PC-3 (cell line): ENCODE measurements at regions of chr7 and their contacts with region 1.

Region 1: GRCh38 chr7:110090110-110090769 is 1000.7 kb upstream of the LRRN3 start:
- DNase-seq: peak; percentile 64
- ATAC-seq: peak; percentile 76
- H3K4me3 ChIP-seq: no peak overlapping the region
- H3K27ac ChIP-seq: no peak overlapping the region
- H3K4me1 ChIP-seq: no peaks in the 10 kb centered on the region
- H3K27me3 ChIP-seq: no peaks in the 10 kb centered on the region
- CTCF ChIP-seq: peak; percentile 60

Region 2: GRCh38 chr7:110130669-110131068 is 40.4 kb after region 1 on chr7:
- CTCF ChIA-PET with region 1: no interaction called
- POLR2A ChIA-PET with region 1: no interaction called
- intact Hi-C with region 1: loop called (anchors 1 kb)
- DNase-seq: peak; percentile 20
- ATAC-seq: peak; percentile 64
- H3K4me3 ChIP-seq: no peak overlapping the region
- H3K27ac ChIP-seq: no peak overlapping the region
- H3K4me1 ChIP-seq: no peaks in the 10 kb centered on the region
- H3K27me3 ChIP-seq: no peaks in the 10 kb centered on the region
- CTCF ChIP-seq: peak; percentile 47

Region 3: GRCh38 chr7:110204527-110204926 is 114.3 kb after region 1 on chr7:
- CTCF ChIA-PET with region 1: no interaction called
- POLR2A ChIA-PET with region 1: no interaction called
- intact Hi-C with region 1: loop called (anchors 1 kb)
- DNase-seq: peak; percentile 39
- ATAC-seq: peak; percentile 78
- H3K4me3 ChIP-seq: no peak overlapping the region
- H3K27ac ChIP-seq: no peak overlapping the region
- H3K4me1 ChIP-seq: no peaks in the 10 kb centered on the region
- H3K27me3 ChIP-seq: no peaks in the 10 kb centered on the region
- CTCF ChIP-seq: peak; percentile 47; the same call in 1 of the 2 replicates

Region 4: DNA sequence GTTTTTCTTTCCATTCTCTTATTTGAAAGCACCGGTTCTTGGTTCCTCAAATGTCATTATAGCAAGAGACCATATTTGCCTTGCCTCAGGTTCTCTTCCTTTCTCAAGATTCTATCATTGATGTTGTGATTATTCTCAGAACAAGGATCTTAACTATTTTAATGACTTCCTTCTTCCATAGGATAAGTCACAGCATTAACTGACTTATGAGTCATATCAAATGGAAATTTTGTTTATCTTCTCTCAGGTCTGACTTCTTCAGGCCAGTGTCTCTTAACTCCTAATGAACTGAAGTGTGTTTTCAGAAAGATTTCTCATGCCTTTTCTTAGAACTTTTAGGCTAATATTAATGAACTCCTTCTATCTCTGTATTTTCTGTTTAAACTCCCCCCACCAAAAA is 206.1 kb after region 1 on chr7:
- CTCF ChIA-PET with region 1: no interaction called
- POLR2A ChIA-PET with region 1: no interaction called
- intact Hi-C with region 1: loop called (anchors 10 kb)
- DNase-seq: peak; percentile 19
- ATAC-seq: peak; percentile 85
- H3K4me3 ChIP-seq: no peak overlapping the region
- H3K27ac ChIP-seq: no peak overlapping the region
- H3K4me1 ChIP-seq: no peaks in the 10 kb centered on the region
- H3K27me3 ChIP-seq: no peaks in the 10 kb centered on the region
- CTCF ChIP-seq: no peak

Region 5: DNA sequence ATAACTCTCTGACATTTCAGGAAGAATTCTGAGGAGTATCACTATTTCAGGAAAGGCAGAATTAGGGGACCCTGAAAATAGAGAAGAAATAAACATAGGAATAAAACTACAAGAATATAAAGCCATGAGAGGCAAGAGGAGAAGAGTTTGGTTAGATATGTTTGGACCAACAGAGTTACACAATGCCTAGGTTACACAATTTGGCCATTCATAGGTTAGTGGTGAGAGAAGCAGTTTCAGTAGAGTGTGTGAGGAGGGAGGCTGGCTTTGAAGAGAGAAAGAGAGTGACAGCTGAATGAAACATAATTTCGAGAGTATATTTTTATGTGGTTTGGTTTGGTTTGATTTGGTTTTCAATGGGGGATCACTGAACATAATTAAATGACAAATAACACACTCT is 217.5 kb after region 1 on chr7:
- CTCF ChIA-PET with region 1: no interaction called
- POLR2A ChIA-PET with region 1: no interaction called
- intact Hi-C with region 1: no loop called
- DNase-seq: no peak
- ATAC-seq: no peak
- H3K4me3 ChIP-seq: no peak overlapping the region
- H3K27ac ChIP-seq: no peak overlapping the region
- H3K4me1 ChIP-seq: no peaks in the 10 kb centered on the region
- H3K27me3 ChIP-seq: no peaks in the 10 kb centered on the region
- CTCF ChIP-seq: no peak

Region 6: GRCh38 chr7:110442381-110442837 is 352.2 kb after region 1 on chr7:
- CTCF ChIA-PET with region 1: no interaction called
- POLR2A ChIA-PET with region 1: no interaction called
- intact Hi-C with region 1: loop called (anchors 1 kb)
- DNase-seq: peak; percentile 61
- ATAC-seq: peak; percentile 99
- H3K4me3 ChIP-seq: no peak overlapping the region
- H3K27ac ChIP-seq: no peak overlapping the region
- H3K4me1 ChIP-seq: no peaks in the 10 kb centered on the region
- H3K27me3 ChIP-seq: no peaks in the 10 kb centered on the region
- CTCF ChIP-seq: peak; percentile 77

Region 7: GRCh38 chr7:111098011-111098925 is 1008.0 kb after region 1 on chr7:
- CTCF ChIA-PET with region 1: no interaction called
- POLR2A ChIA-PET with region 1: no interaction called
- intact Hi-C with region 1: loop called (anchors 10 kb)
- DNase-seq: peak; percentile 73
- ATAC-seq: peak; percentile 86
- H3K4me3 ChIP-seq: peak overlapping the region; percentile 41; the same call in 1 of the 2 replicates
- H3K27ac ChIP-seq: peak overlapping the region; percentile 95
- H3K4me1 ChIP-seq: peaks cover 30% of the 10 kb centered on the region
- H3K27me3 ChIP-seq: no peaks in the 10 kb centered on the region
- CTCF ChIP-seq: peak; percentile 86